ENCODE measurements at regions of chr16 and their contacts with region 1.

Region 1: GRCh38 chr16:3364774-3365427 is 9.2 kb downstream of the OR2C1 start:
- DNase-seq: peak; percentile 69 to 96 (median 89)
- ATAC-seq: peak; percentile 93
- H3K4me3 Mint-ChIP-seq: peak overlapping the region; percentile 77 to 93 (median 86)
- H3K27ac Mint-ChIP-seq: peak overlapping the region; percentile 84 to 96 (median 92)
- H3K4me1 Mint-ChIP-seq: peaks cover 4 to 12% (median 6%) of the 10 kb centered on the region in 4 donors
- H3K27me3 Mint-ChIP-seq: peaks cover 13 to 19% (median 15%) of the 10 kb centered on the region in 5 donors

Region 2: DNA sequence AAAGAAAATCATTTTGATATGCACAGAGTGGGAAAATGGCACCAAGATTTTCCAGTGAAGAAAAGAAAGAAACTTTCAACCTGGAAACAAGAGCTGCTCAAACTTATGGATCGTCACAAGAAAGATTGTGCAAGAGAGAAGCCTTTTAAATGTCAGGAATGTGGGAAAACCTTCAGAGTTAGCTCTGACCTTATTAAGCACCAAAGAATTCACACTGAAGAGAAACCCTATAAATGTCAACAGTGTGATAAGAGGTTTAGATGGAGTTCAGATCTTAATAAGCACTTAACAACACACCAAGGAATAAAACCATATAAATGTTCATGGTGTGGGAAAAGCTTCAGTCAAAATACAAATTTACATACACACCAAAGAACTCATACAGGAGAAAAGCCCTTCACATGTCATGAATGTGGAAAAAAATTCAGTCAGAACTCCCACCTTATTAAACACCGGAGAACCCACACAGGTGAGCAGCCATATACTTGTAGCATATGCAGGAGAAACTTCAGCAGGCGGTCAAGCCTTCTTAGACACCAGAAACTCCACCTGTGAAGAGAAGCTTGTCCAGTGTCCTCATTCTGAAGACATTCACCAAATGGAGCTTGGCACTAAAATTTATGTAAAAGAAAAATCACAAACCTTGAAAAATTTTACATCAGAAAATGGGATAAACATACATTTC is 47.4 kb before region 1 on chr16:
- POLR2A ChIA-PET with region 1: interaction called, 12 read pairs
- DNase-seq: no peak
- ATAC-seq: no peak
- H3K4me3 Mint-ChIP-seq: peak overlapping the region in 1 of 10 donors; percentile 14
- H3K27ac Mint-ChIP-seq: peak overlapping the region in 1 of 10 donors; percentile 31
- H3K4me1 Mint-ChIP-seq: peaks cover 0 to 3% (median 1%) of the 10 kb centered on the region in 4 donors
- H3K27me3 Mint-ChIP-seq: no peaks in the 10 kb centered on the region

Region 3: DNA sequence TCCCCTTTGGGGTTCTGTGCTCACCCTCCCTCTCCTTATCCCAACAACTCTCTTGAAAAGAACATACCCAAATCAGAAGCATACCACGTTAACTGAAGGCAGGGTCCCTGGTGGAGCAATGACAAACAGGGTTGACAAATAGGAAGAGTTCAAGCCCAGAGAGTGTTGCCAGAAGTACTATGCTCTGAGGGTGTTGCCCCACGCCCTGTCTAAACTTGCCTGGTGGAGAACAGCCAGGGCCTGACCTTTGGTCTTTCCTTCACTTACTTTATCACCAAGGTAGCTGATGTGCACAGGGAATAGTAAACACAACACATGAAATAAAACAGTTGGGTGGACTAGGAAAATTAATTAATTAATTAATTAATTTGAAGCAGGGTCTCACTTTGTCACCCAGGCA is 36.3 kb before region 1 on chr16:
- POLR2A ChIA-PET with region 1: no interaction called
- DNase-seq: no peak
- ATAC-seq: no peak
- H3K4me3 Mint-ChIP-seq: no peak overlapping the region
- H3K27ac Mint-ChIP-seq: no peak overlapping the region
- H3K4me1 Mint-ChIP-seq: no peaks in the 10 kb centered on the region
- H3K27me3 Mint-ChIP-seq: no peaks in the 10 kb centered on the region

Region 4: DNA sequence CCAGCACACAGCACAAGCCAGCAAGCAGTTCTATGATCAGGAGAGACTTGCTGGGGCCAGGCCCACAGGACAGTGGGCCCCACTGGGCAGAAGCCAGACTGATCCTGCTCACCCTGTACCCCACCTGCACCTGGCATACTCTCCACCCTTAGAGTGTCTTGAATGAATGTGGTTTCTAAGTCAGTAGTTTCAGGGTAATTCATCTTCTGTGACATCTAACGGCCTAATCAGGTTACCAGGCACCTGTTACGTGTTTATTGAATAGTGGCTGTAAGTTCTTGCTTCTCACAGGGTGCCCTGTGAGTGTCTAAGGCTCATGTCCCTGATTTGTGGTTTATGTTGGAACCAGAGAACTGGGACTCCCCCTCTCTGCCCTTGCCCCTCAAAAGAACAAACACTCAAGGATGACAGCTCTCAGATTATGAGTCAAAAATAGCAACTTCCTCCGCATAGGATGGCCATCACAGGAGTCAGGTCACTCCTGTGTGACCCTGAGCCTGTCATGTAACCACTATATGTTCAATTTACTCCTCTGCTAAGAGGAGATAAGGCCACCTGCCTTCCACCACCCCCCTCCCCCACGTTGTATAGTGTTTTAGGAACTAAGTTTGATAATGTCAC is 16.2 kb before region 1 on chr16:
- POLR2A ChIA-PET with region 1: no interaction called
- DNase-seq: no peak
- ATAC-seq: no peak
- H3K4me3 Mint-ChIP-seq: no peak overlapping the region
- H3K27ac Mint-ChIP-seq: no peak overlapping the region
- H3K4me1 Mint-ChIP-seq: peaks cover 0 to 2% (median under 1%) of the 10 kb centered on the region in 4 donors
- H3K27me3 Mint-ChIP-seq: peaks cover 0 to 3% (median 1%) of the 10 kb centered on the region in 5 donors

Region 5: DNA sequence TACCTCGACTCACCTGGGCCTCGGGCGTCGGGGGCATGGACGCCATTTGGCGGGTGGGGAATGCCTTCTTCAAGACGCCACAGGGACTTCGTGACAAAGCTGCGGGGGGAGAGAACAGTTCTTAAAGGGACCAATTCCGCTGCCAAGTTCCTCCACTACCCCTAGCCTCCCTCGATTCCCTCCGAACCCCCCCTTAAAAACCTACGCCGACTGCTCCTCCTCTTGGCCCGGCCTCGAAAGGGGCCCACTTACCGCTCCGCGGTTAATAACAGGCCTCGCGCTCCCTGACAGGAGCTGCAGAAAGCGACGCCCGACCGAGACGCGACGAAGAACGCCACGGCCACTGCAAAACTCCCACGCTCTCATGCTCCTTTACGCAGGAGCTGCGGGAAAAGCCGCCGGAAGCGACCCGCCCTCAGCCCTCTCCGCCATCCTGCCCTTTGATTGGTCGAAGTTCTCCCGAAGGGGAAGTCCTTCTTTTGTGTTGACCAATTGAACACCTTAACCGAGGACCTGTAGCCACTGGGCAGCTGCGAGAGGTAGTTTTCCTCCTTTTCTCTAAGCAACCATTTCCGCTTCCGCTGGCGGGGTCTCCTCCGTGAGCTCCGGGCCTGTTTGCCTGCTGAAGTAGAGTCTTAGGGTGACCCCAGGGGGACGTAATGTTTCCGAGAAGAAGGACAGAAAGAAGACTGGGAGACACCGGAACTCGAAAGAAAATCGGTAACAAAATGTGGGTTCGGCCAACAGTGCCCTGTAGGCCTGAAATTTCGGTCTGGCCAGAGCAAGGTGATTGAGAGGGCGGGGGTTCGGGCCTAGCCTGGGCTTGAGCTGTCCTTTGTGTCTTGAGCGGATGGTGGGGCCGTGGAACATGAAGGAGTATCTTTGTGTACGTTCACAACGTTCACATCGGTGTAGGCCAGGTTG is 78.5 kb after region 1 on chr16 and contains the starts of genes NAA60 and ZNF597:
- POLR2A ChIA-PET with region 1: interaction called, 19 read pairs
- DNase-seq: peak; percentile 54 to 89 (median 80)
- ATAC-seq: peak; percentile 93 to 97
- H3K4me3 Mint-ChIP-seq: peak within 1 kb of the TSS; percentile 92 to 99 (median 95)
- H3K27ac Mint-ChIP-seq: peak within 1 kb of the TSS; percentile 88 to 99 (median 96)
- H3K4me1 Mint-ChIP-seq: peaks cover 5 to 48% (median 28%) of the 10 kb centered on the region in 4 donors
- H3K27me3 Mint-ChIP-seq: no peaks in the 10 kb centered on the region
- polyA plus RNA-seq, gene NAA60: 36.9 to 56.1 (median 44.4) TPM
- polyA plus RNA-seq, gene ZNF597: 1.1 to 2.3 (median 1.9) TPM

Measured in naive thymus-derived CD8-positive, alpha-beta T cell (primary cell).